Activated CD4-positive, alpha-beta T cell treated with anti-CD3 and anti-CD28 coated beads for 36 hours (primary cell): ENCODE measurements at regions of chr3 and their contacts with region 1.

Region 1: GRCh38 chr3:44642337-44642736 is 6.2 kb upstream of the ZNF35 start:
- DNase-seq: no peak
- ATAC-seq: no peak
- H3K4me3 Mint-ChIP-seq: no peak overlapping the region
- H3K27ac Mint-ChIP-seq: no peak overlapping the region
- H3K4me1 Mint-ChIP-seq: no peaks in the 10 kb centered on the region
- H3K27me3 Mint-ChIP-seq: no peaks in the 10 kb centered on the region

Region 2: GRCh38 chr3:43423142-43423541 is 1219.2 kb before region 1 on chr3:
- CTCF ChIA-PET with region 1: no interaction called
- POLR2A ChIA-PET with region 1: no interaction called
- intact Hi-C with region 1: no loop called
- DNase-seq: no peak
- ATAC-seq: no peak
- H3K4me3 Mint-ChIP-seq: no peak overlapping the region
- H3K27ac Mint-ChIP-seq: no peak overlapping the region
- H3K4me1 Mint-ChIP-seq: no peaks in the 10 kb centered on the region
- H3K27me3 Mint-ChIP-seq: no peaks in the 10 kb centered on the region

Region 3: GRCh38 chr3:44721231-44722102 is 79.1 kb after region 1 on chr3:
- CTCF ChIA-PET with region 1: no interaction called
- POLR2A ChIA-PET with region 1: no interaction called
- intact Hi-C with region 1: loop called in 1 of 2 experiments (anchors 5 kb)
- DNase-seq: no peak
- ATAC-seq: no peak
- H3K4me3 Mint-ChIP-seq: no peak overlapping the region
- H3K27ac Mint-ChIP-seq: no peak overlapping the region
- H3K4me1 Mint-ChIP-seq: no peaks in the 10 kb centered on the region
- H3K27me3 Mint-ChIP-seq: no peaks in the 10 kb centered on the region

Region 4: DNA sequence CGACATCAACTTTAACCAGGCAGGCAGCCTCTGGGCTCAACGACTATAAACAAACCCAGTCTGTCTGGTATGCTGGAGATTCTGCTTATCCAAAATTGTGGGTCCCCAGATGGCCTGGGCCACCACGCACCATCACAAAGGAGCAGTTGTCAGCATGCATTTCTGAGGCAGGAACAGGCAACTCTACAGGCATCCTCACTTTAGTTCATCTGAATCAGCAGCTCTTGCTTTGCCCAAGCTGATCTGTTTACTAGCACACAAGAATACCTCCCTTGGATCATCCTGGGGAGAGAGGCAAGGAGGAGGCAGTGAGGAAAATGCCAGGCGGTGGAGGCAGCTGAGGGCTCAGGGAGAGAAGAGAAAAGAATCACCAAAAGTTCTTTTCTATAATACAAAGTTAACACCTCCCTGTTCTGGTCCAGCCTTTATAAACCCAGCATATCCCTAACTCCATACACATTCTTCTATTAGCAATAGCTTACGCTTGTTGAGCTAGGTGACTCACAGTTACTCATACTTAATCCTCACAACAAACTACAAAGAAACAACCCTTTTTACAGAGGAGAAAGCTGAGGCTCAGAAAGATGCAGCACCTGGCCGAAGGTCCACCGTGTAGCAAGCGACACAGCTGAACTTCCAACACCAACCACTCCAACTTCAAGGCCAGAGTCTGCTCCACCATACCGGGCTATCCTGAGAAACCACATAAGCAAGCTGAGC is 300.0 kb after region 1 on chr3:
- CTCF ChIA-PET with region 1: no interaction called
- POLR2A ChIA-PET with region 1: no interaction called
- intact Hi-C with region 1: no loop called
- DNase-seq: no peak
- ATAC-seq: no peak
- H3K4me3 Mint-ChIP-seq: no peak overlapping the region
- H3K27ac Mint-ChIP-seq: no peak overlapping the region
- H3K4me1 Mint-ChIP-seq: no peaks in the 10 kb centered on the region
- H3K27me3 Mint-ChIP-seq: no peaks in the 10 kb centered on the region